Ascending aorta (tissue), 2 donors: ENCODE measurements at regions of chr2 and their contacts with region 1.

Region 1: GRCh38 chr2:38750891-38751595 is at the start of gene SRSF7:
- DNase-seq: peak; percentile 89 to 99
- H3K4me3 ChIP-seq: peak within 1 kb of the TSS; percentile 71 to 90
- H3K27ac ChIP-seq: peak within 1 kb of the TSS; percentile 87 to 98
- H3K4me1 ChIP-seq: peaks cover 5 to 28% of the 10 kb centered on the region in 2 donors
- H3K27me3 ChIP-seq: no peaks in the 10 kb centered on the region
- CTCF ChIP-seq: no peak
- total RNA-seq, gene SRSF7: 54.1 TPM

Region 2: GRCh38 chr2:38377050-38377828 is 373.8 kb before region 1 on chr2 and contains the start of gene ATL2:
- intact Hi-C with region 1: loop called (anchors 2 kb)
- DNase-seq: peak; percentile 82 to 98
- H3K4me3 ChIP-seq: peak within 1 kb of the TSS; percentile 77 to 86
- H3K27ac ChIP-seq: peak within 1 kb of the TSS; percentile 94 to 97
- H3K4me1 ChIP-seq: peaks cover 0 to 24% of the 10 kb centered on the region in 2 donors
- H3K27me3 ChIP-seq: no peaks in the 10 kb centered on the region
- CTCF ChIP-seq: no peak
- total RNA-seq, gene ATL2: 49.1 TPM

Region 3: DNA sequence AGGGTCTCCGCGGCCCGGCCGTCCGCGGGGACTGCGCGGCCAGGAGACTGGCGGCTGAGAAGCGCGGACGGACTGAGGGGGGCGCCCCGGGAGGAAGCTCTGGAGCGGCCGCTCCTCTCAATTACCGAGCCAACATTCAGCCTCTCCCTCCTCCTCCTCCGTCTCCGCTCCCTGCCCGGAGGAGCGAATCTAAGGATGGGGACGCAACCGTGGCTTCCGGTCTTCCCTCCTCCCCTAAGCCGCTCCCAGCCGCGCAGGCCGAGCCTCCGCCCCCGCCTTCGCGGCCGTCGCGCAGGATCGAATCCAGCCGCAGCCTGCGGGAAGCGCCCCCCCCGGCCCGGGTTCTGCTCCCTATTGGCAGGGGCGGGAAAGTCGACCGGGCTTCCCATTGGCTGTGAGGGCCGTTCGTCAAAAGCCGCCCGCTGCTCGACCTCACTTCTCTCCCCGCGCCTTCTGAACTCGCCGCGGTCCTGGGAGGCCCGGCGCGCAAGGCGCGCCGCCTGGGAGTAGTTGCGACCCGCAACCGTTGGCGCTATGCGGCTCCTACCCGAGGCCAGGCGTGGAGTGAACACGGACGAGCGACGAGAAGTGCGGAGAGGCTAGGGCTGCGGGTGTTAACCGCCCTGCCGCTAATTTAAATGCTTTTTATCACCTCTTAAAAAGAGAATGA is 148.2 kb before region 1 on chr2 and contains the start of gene HNRNPLL:
- intact Hi-C with region 1: loop called (anchors 2 kb)
- DNase-seq: peak; percentile 91 to 98
- H3K4me3 ChIP-seq: peak within 1 kb of the TSS; percentile 90 to 91
- H3K27ac ChIP-seq: peak within 1 kb of the TSS; percentile 96 to 99
- H3K4me1 ChIP-seq: peaks cover 4 to 29% of the 10 kb centered on the region in 2 donors
- H3K27me3 ChIP-seq: no peaks in the 10 kb centered on the region
- CTCF ChIP-seq: no peak
- total RNA-seq, gene HNRNPLL: 10.6 TPM

Region 4: GRCh38 chr2:38665854-38666555 is 85.0 kb before region 1 on chr2 and contains the start of gene GALM:
- intact Hi-C with region 1: loop called (anchors 2 kb)
- DNase-seq: peak; percentile 59 to 93
- H3K4me3 ChIP-seq: peak within 1 kb of the TSS; percentile 78 to 80
- H3K27ac ChIP-seq: peak within 1 kb of the TSS; percentile 60 to 80
- H3K4me1 ChIP-seq: peaks cover 0 to 7% of the 10 kb centered on the region in 2 donors
- H3K27me3 ChIP-seq: no peaks in the 10 kb centered on the region
- CTCF ChIP-seq: no peak
- total RNA-seq, gene GALM: 1.4 TPM

Region 5: GRCh38 chr2:38778687-38779082 is 27.6 kb after region 1 on chr2:
- intact Hi-C with region 1: loop called (anchors 2 kb)
- DNase-seq: no peak
- H3K4me3 ChIP-seq: peak overlapping the region; percentile 62 to 78
- H3K27ac ChIP-seq: no peak overlapping the region
- H3K4me1 ChIP-seq: peaks cover 0 to 4% of the 10 kb centered on the region in 2 donors
- H3K27me3 ChIP-seq: no peaks in the 10 kb centered on the region
- CTCF ChIP-seq: no peak